MCF 10A (cell line): ENCODE measurements at regions of chr2 and their contacts with region 1.

Region 1: DNA sequence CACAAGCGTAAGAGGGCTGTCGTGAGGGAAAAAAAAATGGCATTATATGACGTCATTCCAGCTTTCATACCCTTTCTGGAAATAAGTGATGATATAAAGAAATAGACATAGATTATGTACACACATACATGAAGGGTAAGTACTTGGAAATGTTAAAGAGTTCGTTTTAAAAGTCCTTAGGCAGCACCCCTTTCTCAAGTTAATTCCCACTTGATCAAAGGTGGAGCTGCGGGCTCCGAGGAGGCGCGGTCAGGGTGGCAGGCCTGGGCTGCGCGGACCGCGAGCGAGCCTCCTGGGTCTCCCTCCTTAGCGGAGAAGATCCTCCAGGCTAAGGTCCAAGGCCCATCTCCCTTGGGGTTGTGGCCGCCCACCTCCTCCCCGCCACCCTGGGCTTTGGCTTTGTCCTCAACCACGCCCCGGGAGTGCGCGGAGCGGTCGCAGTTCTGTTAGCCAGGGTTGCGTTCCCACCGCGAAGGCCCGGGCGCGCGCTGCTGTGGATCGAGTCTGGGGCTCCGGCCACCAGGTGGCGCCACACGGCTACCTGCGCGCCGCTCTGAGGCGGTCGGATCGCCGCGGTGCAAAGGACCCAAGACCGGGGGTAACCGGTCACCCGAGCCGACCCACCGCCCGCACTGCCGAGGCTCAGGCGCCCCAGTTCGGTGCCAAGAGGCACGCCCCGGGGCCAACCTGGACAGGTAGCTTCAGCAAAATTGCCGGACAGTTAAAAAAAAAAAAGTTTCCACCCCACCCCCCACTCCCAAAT is 66.8 kb downstream of the HNRNPLL start:
- DNase-seq: peak; percentile 66
- H3K4me3 Mint-ChIP-seq: peak overlapping the region; percentile 47
- H3K27ac Mint-ChIP-seq: no peak overlapping the region
- H3K4me1 Mint-ChIP-seq: no peaks in the 10 kb centered on the region
- H3K27me3 Mint-ChIP-seq: no peaks in the 10 kb centered on the region
- CTCF ChIP-seq: peak; percentile 80

Region 2: GRCh38 chr2:38560092-38560491 is 24.2 kb after region 1 on chr2:
- CTCF ChIA-PET with region 1: interaction called, 12 read pairs
- POLR2A ChIA-PET with region 1: no interaction called
- intact Hi-C with region 1: no loop called
- DNase-seq: no peak
- H3K4me3 Mint-ChIP-seq: no peak overlapping the region
- H3K27ac Mint-ChIP-seq: no peak overlapping the region
- H3K4me1 Mint-ChIP-seq: no peaks in the 10 kb centered on the region
- H3K27me3 Mint-ChIP-seq: no peaks in the 10 kb centered on the region
- CTCF ChIP-seq: no peak

Region 3: DNA sequence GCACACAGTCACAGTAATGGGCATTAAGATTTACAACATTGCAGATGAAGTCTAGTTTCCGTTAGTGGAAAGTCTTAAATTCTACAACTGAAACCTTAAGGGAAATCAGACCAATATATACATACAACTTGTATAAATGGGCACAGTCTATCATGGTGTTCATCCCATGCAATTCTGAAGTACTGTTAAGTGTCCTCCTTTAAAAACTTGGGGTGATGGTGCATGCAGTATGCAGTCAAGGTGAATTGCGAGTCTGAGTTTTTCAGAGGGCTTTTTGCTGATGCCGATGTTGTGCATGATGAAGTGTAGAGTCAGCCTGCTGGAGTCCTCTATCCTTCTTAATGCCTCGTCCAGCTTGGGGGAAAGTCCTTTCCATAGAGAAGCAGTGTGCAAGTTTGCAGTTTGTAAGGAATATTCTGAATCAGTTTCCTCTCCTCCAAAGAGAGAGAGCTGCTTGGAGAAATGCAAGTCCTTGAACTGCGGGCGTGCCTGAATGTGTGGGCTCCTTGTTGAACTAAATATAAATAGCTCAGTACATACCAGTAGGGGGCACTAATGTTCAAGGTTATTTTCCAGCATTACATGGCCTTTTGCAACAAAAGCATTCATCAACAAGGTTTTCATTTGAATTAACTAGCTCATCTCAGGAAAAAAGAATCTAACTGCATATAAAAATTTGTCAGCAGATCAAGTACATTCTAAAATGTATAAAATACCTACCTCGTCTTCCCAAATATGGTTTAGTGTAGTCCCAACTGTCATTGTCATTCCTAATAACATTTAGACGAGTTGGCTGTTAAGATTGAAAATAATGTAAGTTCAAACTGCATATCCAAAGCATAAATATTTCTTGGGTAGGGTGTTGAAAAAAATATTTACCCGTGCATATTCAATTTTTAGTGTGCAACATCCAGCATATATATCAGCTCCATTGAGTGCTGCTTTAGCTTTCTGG is 45.5 kb after region 1 on chr2:
- CTCF ChIA-PET with region 1: interaction called, 10 read pairs
- POLR2A ChIA-PET with region 1: no interaction called
- intact Hi-C with region 1: loop called (anchors 5 kb)
- DNase-seq: peak; percentile 77
- H3K4me3 Mint-ChIP-seq: no peak overlapping the region
- H3K27ac Mint-ChIP-seq: no peak overlapping the region
- H3K4me1 Mint-ChIP-seq: peaks cover 5% of the 10 kb centered on the region
- H3K27me3 Mint-ChIP-seq: no peaks in the 10 kb centered on the region
- CTCF ChIP-seq: peak; percentile 56

Region 4: DNA sequence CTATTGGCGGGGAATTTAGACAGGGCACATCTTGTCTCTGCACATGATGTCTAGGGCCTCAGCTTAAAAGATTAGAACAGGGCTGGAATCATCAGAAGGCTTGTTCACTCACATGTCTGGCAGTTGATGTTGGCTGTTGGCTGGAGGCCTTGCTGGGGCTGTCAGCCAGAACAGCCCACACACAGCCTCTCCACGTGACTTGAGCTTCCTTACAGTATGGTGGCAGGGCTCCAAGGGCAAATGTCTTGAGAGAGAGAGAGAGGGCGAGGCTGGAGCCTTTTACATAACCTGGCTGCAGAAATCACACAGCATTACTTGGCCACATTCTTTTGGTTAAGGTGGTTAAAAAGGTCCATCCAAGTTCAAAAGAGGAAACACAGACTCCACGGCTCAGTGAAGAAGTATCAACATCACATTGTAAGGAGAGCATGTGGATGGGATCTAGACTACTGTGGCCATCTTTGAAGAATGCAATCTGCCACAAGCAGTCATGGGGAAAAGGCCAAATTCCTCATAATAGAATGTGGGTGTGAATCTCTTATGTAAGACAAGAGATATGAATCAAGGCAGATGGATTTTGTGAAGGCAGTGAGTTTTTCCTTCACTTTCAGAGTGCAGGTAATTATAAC is 184.8 kb after region 1 on chr2:
- CTCF ChIA-PET with region 1: interaction called, 12 read pairs
- POLR2A ChIA-PET with region 1: no interaction called
- intact Hi-C with region 1: loop called (anchors 5 kb)
- DNase-seq: peak; percentile 97
- H3K4me3 Mint-ChIP-seq: no peak overlapping the region
- H3K27ac Mint-ChIP-seq: peak overlapping the region; percentile 36
- H3K4me1 Mint-ChIP-seq: peaks cover 19% of the 10 kb centered on the region
- H3K27me3 Mint-ChIP-seq: no peaks in the 10 kb centered on the region
- CTCF ChIP-seq: no peak

Region 5: DNA sequence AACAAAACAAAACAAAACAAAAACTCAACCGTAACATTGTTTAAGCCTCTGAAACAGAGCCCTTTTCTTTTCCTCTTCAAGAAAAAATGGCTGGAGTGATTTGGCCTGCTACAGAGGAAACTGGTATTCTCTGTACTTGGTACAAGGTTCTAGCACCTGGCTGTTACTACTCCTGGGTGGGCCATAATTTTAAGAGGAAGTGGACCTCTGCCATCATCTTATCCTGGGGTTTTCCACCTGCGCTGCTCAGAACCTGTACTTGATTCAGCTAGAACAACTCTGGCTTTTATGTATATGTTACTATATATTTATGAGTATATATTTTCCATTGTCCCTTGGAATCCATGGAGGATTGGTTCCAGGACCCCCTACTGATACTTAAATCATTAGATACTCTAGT is 192.8 kb after region 1 on chr2:
- CTCF ChIA-PET with region 1: interaction called, 12 read pairs
- POLR2A ChIA-PET with region 1: no interaction called
- intact Hi-C with region 1: loop called (anchors 5 kb)
- DNase-seq: no peak
- H3K4me3 Mint-ChIP-seq: no peak overlapping the region
- H3K27ac Mint-ChIP-seq: no peak overlapping the region
- H3K4me1 Mint-ChIP-seq: no peaks in the 10 kb centered on the region
- H3K27me3 Mint-ChIP-seq: no peaks in the 10 kb centered on the region
- CTCF ChIP-seq: no peak

Region 6: GRCh38 chr2:38734299-38735058 is 198.6 kb after region 1 on chr2:
- CTCF ChIA-PET with region 1: interaction called, 10 read pairs
- POLR2A ChIA-PET with region 1: no interaction called
- intact Hi-C with region 1: loop called (anchors 5 kb)
- DNase-seq: no peak
- H3K4me3 Mint-ChIP-seq: no peak overlapping the region
- H3K27ac Mint-ChIP-seq: no peak overlapping the region
- H3K4me1 Mint-ChIP-seq: peaks cover 5% of the 10 kb centered on the region
- H3K27me3 Mint-ChIP-seq: no peaks in the 10 kb centered on the region
- CTCF ChIP-seq: no peak

Region 7: DNA sequence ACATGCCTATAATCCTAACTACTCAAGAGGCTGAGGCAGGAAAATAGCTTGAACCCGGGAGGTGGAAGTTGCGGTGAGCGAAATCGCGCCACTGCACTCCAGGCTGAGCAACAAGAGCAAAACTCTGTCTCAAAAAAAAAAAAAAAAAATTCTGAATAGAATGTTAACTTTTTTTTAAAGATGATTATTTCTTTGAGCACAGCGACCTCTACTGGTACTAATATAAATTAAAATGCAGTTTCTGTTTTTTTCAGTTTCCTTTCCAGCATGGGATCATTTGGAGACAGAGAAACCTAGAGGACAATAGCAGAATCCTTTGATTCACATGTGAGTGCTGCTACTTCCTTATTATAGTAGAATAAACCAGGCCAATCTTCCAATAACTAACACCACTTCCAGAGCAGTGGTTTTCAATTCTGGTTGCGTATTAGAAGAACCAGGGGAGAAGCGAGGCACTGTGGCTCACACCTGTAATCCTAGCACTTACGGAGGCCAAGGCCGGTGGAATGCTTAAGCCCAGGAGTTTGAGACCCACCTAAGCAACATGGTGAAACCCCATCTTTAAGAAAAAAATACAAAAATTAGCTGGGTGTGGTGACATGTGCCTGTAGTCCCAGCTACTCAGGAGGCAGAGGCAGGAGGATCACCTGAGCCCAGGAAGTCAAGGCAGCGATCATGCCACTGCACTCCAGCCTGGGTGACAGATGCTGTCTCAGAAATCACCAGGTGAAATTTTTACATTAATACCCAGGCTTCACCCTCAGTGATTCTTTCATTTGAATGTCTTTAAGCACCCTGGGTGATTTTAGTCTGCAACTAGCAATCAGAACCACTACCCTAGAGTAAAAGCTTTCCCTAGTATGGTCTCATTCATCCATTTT is 205.2 kb after region 1 on chr2:
- CTCF ChIA-PET with region 1: interaction called, 3 read pairs
- POLR2A ChIA-PET with region 1: no interaction called
- intact Hi-C with region 1: loop called (anchors 5 kb)
- DNase-seq: peak; percentile 33
- H3K4me3 Mint-ChIP-seq: no peak overlapping the region
- H3K27ac Mint-ChIP-seq: no peak overlapping the region
- H3K4me1 Mint-ChIP-seq: peaks cover 5% of the 10 kb centered on the region
- H3K27me3 Mint-ChIP-seq: no peaks in the 10 kb centered on the region
- CTCF ChIP-seq: peak; percentile 45